Left cardiac atrium (tissue), 4 donors: ENCODE measurements at regions of chr10 and their contacts with region 1.

Region 1: DNA sequence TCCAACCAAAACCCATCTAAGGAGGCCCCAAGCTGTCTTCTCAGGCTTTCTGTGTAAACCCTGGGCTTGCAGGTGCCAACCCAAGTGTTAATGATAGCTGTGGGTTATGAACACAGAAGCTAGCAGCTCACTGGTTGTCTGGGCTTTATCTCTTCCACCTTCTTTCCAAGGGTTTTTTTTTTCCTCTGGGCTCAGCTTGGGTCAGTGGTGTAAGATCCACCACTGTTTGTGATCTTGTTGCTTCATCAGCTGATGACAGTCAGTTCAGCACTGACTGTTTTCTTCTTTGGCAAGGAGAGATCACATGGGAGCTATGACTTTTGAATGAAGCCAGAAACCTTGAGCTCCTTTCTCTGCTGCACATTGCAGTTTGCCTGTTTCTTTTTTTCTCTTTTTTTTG is 4.6 kb downstream of the GTPBP4 start:
- DNase-seq: no peak
- ATAC-seq: peak in 1 of 2 donors; percentile 14

Region 2: DNA sequence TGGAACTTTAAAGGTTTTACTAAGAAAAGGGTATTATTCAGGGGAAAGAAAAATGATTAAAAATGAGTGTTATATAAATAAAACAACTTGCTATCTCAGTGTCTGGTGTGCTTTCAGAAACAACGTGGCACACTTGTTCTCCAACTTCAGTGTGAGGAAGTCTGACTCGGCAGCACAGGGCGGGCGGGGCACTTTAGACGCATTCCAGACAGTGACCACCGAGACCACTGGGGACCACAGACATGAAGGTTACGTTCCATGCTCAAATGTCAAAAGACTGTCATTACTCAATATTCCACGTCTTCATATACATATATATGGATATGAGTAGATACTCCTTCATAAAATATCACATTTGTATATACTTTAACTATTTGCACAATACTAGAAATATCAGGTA is 148.3 kb before region 1 on chr10:
- intact Hi-C with region 1: loop called in 1 of 2 experiments (anchors 10 kb)
- DNase-seq: peak; percentile 40
- ATAC-seq: peak in 1 of 2 donors; percentile 55